Activated naive CD4-positive, alpha-beta T cell treated with anti-CD3 and anti-CD28 coated beads for 36 hours (primary cell): ENCODE measurements at regions of chr20 and their contacts with region 1.

Region 1: DNA sequence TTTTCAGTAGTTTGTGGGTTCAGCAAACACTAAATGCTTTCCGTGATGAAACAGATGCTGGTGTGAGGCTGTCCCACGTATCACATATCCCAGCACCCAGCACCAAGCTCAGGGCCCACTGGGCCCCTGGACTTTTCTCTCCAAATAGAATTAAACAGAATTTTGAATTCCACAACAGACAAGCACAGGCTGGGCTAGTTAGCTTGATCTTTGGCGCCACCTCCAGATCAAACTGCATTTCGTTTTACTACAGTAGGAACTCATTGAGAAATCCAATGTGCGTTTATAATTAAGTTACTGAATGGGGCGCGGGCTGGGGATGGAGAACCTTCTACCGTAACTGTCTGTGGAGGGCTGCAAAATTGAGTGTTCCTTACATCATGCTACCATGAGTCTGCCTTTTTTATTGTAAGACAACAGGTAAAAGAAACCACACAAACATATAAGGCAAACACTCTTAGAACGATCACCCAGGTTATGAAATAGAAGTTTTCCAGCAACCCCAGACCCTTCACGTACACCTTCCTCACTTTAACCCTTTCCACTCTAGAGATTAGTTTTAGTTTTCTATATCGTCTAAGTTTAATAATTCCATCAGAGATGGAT is 107.8 kb downstream of the ZFP64 start:
- DNase-seq: peak; percentile 76
- H3K4me3 Mint-ChIP-seq: no peak overlapping the region
- H3K27ac Mint-ChIP-seq: no peak overlapping the region
- H3K4me1 Mint-ChIP-seq: no peaks in the 10 kb centered on the region
- H3K27me3 Mint-ChIP-seq: no peaks in the 10 kb centered on the region

Region 2: DNA sequence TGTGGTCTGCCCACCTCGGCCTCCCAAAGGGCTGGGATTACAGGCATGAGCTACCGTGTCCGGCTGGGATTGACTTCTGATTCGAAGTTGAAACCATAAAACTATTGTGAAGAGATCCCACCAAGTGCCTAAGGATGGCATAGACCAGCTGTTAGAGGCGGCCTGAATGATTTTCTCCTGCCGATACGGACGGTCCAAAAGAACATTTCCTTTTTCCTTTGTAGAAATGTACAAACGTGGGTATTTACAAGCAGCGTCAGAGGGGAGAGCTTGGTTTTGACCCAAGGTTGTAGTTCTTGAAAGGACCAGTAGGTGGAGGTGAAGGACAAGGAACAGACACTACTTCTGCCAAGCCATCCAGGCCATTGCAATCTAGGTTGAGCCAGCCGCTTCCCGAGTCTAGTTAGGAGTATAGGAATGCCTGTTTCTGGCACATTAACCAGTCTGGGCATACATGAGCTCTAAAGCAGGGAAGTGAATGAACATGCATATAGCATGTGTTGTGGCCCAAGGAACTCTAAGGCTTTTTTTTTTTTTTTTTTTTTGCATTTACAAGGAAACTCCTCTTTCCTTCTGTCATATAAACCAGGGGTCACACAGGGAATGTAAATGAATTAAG is 1096.0 kb before region 1 on chr20:
- CTCF ChIA-PET with region 1: interaction called, 3 read pairs
- intact Hi-C with region 1: loop called (anchors 2 kb)
- DNase-seq: peak; percentile 78
- H3K4me3 Mint-ChIP-seq: no peak overlapping the region
- H3K27ac Mint-ChIP-seq: no peak overlapping the region
- H3K4me1 Mint-ChIP-seq: no peaks in the 10 kb centered on the region
- H3K27me3 Mint-ChIP-seq: peaks cover 23% of the 10 kb centered on the region

Region 3: GRCh38 chr20:51372176-51372803 is 711.4 kb before region 1 on chr20:
- CTCF ChIA-PET with region 1: no interaction called
- intact Hi-C with region 1: loop called (anchors 5 kb)
- DNase-seq: peak; percentile 77
- H3K4me3 Mint-ChIP-seq: no peak overlapping the region
- H3K27ac Mint-ChIP-seq: no peak overlapping the region
- H3K4me1 Mint-ChIP-seq: peaks cover 1% of the 10 kb centered on the region
- H3K27me3 Mint-ChIP-seq: no peaks in the 10 kb centered on the region

Region 4: GRCh38 chr20:51639206-51639832 is 444.4 kb before region 1 on chr20:
- CTCF ChIA-PET with region 1: no interaction called
- intact Hi-C with region 1: loop called (anchors 1 kb)
- DNase-seq: peak; percentile 72
- H3K4me3 Mint-ChIP-seq: no peak overlapping the region
- H3K27ac Mint-ChIP-seq: no peak overlapping the region
- H3K4me1 Mint-ChIP-seq: no peaks in the 10 kb centered on the region
- H3K27me3 Mint-ChIP-seq: peaks cover 6% of the 10 kb centered on the region

Region 5: GRCh38 chr20:51712501-51713197 is 371.1 kb before region 1 on chr20:
- CTCF ChIA-PET with region 1: no interaction called
- intact Hi-C with region 1: loop called (anchors 5 kb)
- DNase-seq: no peak
- H3K4me3 Mint-ChIP-seq: no peak overlapping the region
- H3K27ac Mint-ChIP-seq: no peak overlapping the region
- H3K4me1 Mint-ChIP-seq: peaks cover 9% of the 10 kb centered on the region
- H3K27me3 Mint-ChIP-seq: peaks cover 5% of the 10 kb centered on the region

Region 6: GRCh38 chr20:51800060-51800794 is 283.5 kb before region 1 on chr20:
- CTCF ChIA-PET with region 1: interaction called, 5 read pairs
- intact Hi-C with region 1: loop called (anchors 2 kb)
- DNase-seq: peak; percentile 76
- H3K4me3 Mint-ChIP-seq: peak overlapping the region; percentile 41
- H3K27ac Mint-ChIP-seq: no peak overlapping the region
- H3K4me1 Mint-ChIP-seq: peaks cover 12% of the 10 kb centered on the region
- H3K27me3 Mint-ChIP-seq: peaks cover 45% of the 10 kb centered on the region